ENCODE measurements at regions of chr12 and their contacts with region 1.

Region 1: DNA sequence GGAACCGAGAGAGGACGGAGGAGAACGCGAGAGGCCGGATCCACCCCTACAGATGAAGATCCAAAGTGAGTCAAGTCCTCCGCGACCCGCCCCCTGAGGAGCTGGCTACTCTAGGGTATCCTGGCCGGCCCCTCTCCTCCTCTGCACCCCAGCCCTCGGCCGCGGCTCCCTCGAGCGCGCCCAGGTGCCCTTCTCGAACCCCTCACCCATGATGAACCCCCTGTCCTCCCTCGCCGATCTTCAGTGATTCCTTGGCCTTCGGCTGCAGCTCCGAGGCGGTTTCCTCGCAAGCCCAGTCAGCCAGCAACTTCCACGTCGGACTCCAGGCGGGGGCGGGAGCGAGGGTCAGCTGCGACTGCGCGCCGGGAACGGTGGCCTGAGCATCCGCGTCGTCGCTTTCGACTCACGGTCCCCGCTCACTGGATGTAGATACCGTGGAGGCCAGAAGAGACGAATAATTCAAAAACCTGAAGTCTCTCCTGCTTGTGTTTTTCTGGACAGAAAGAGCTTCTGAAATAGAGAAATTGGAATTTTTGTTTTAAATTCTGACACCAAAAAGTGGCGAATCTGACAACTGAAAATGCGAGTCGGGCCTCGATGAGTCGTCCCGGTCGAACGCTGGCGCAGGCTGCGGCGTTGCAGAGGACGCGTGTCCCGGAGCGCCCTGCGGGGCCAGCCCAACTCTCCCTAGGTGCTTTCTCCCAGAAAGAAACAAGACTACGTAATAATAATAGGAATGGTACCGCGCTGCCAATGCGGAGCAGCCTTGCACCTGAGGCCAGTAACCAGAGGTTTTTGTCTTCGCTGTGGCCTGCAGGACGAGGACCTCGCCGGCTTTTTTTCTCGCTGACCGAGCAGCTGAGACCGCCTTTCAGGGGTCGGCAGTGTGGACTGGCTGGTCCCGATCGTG is at the start of gene ARL1:
- DNase-seq: peak; percentile 92
- ATAC-seq: peak; percentile 86
- H3K4me3 ChIP-seq: peak within 1 kb of the TSS; percentile 80 to 95 (median 93)
- H3K4me3 Mint-ChIP-seq: peak within 1 kb of the TSS; percentile 99
- H3K27ac ChIP-seq: peak within 1 kb of the TSS; percentile 91 to 96
- H3K27ac Mint-ChIP-seq: peak within 1 kb of the TSS; percentile 97
- H3K4me1 ChIP-seq: peaks cover 9 to 12% of the 10 kb centered on the region in 2 donors
- H3K4me1 Mint-ChIP-seq: peaks cover 28% of the 10 kb centered on the region
- H3K27me3 ChIP-seq: no peaks in the 10 kb centered on the region
- H3K27me3 Mint-ChIP-seq: peaks cover 5% of the 10 kb centered on the region
- CTCF ChIP-seq: no peak
- total RNA-seq, gene ARL1: 40.7 and 51.2 TPM in 2 replicates

Region 2: GRCh38 chr12:101280006-101280505 is 127.6 kb before region 1 on chr12 and contains the start of gene UTP20:
- CTCF ChIA-PET with region 1: no interaction called
- POLR2A ChIA-PET with region 1: no interaction called
- intact Hi-C with region 1: loop called (anchors 5 kb)
- DNase-seq: peak; percentile 94
- ATAC-seq: peak; percentile 100
- H3K4me3 ChIP-seq: peak within 1 kb of the TSS; percentile 69 to 100 (median 100)
- H3K4me3 Mint-ChIP-seq: peak within 1 kb of the TSS; percentile 97
- H3K27ac ChIP-seq: peak within 1 kb of the TSS; percentile 48 to 60
- H3K27ac Mint-ChIP-seq: peak within 1 kb of the TSS; percentile 93
- H3K4me1 ChIP-seq: peaks cover 4 to 11% of the 10 kb centered on the region in 2 donors
- H3K4me1 Mint-ChIP-seq: peaks cover 13% of the 10 kb centered on the region
- H3K27me3 ChIP-seq: peaks cover 0 to 10% (median 1%) of the 10 kb centered on the region in 4 experiments
- H3K27me3 Mint-ChIP-seq: peaks cover 17% of the 10 kb centered on the region
- CTCF ChIP-seq: no peak
- total RNA-seq, gene UTP20: 19.7 and 22.7 TPM in 2 replicates

Measured in B cell (primary cell).